ENCODE measurements at regions of chr1 and their contacts with region 1.

Region 1: DNA sequence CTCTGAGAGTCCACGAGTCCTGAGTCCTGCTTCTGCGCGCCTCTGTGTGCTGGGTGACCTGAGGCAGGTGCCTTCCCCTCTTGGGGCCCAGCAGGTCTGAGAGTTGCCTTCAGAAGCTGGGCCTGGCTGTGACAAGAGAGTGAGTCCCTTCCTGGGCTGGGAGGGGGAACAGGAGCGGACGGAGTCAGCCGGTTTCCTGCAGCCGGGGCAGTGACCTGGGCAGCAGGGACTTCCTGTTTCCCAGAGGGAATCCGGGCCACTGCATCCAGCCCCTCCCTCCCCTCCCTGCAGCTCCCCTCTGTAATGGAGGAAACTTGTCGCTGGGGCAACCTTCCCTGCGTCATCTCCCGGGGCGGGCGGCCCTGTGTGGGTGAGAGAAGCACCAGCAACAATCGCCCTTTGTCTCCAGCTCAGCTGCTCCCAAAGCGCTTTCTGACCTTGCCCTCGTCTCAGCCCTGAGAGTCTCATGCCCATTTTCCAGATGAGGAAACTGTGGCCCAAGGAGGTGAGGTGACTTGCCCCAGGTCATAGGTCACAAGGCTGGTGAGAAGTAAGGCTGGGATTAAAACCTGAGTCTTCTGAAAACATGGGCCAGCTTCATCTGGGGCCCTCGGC is 61.1 kb downstream of the SDC3 start:
- DNase-seq: peak; percentile 94 to 95 (median 94)
- ATAC-seq: peak; percentile 89 to 95
- H3K4me3 ChIP-seq: no peak overlapping the region
- H3K27ac ChIP-seq: peak overlapping the region; percentile 65
- H3K4me1 ChIP-seq: peaks cover 5% of the 10 kb centered on the region
- H3K27me3 ChIP-seq: no peaks in the 10 kb centered on the region

Region 2: GRCh38 chr1:30253807-30254440 is 593.5 kb before region 1 on chr1:
- intact Hi-C with region 1: no loop called
- DNase-seq: no peak
- ATAC-seq: no peak
- H3K4me3 ChIP-seq: no peak overlapping the region
- H3K27ac ChIP-seq: no peak overlapping the region
- H3K4me1 ChIP-seq: no peaks in the 10 kb centered on the region
- H3K27me3 ChIP-seq: no peaks in the 10 kb centered on the region

Region 3: GRCh38 chr1:30801771-30802198 is 45.7 kb before region 1 on chr1:
- intact Hi-C with region 1: loop called in 1 of 4 experiments (anchors 5 kb)
- DNase-seq: peak; percentile 81 to 94 (median 93)
- ATAC-seq: peak; percentile 44 to 54
- H3K4me3 ChIP-seq: no peak overlapping the region
- H3K27ac ChIP-seq: no peak overlapping the region
- H3K4me1 ChIP-seq: peaks cover 7% of the 10 kb centered on the region
- H3K27me3 ChIP-seq: no peaks in the 10 kb centered on the region

Region 4: GRCh38 chr1:30902182-30902581 is 54.7 kb after region 1 on chr1:
- intact Hi-C with region 1: loop called in 1 of 4 experiments (anchors 5 kb)
- DNase-seq: peak; percentile 75 to 92 (median 90)
- ATAC-seq: peak; percentile 73 to 81
- H3K4me3 ChIP-seq: no peak overlapping the region
- H3K27ac ChIP-seq: peak overlapping the region; percentile 75
- H3K4me1 ChIP-seq: peaks cover 14% of the 10 kb centered on the region
- H3K27me3 ChIP-seq: no peaks in the 10 kb centered on the region

Measured in right cardiac atrium (tissue), 5 donors.